CD4-positive, alpha-beta T cell (primary cell): ENCODE measurements at regions of chr20 and their contacts with region 1.

Region 1: GRCh38 chr20:49245921-49246740 is 26.9 kb downstream of the DDX27 start:
- DNase-seq: peak in 4 of 14 experiments; percentile 32 to 58 (median 51)
- ATAC-seq: peak; percentile 67
- H3K4me3 ChIP-seq: no peak overlapping the region
- H3K4me3 Mint-ChIP-seq: no peak overlapping the region
- H3K27ac ChIP-seq: no peak overlapping the region
- H3K27ac Mint-ChIP-seq: peak overlapping the region; percentile 14
- H3K4me1 ChIP-seq: no peaks in the 10 kb centered on the region
- H3K4me1 Mint-ChIP-seq: peaks cover 5% of the 10 kb centered on the region
- H3K27me3 ChIP-seq: no peaks in the 10 kb centered on the region
- H3K27me3 Mint-ChIP-seq: no peaks in the 10 kb centered on the region
- CTCF ChIP-seq: peak; percentile 71

Region 2: GRCh38 chr20:49268600-49269365 is 22.7 kb after region 1 on chr20:
- CTCF ChIA-PET with region 1: no interaction called
- POLR2A ChIA-PET with region 1: no interaction called
- intact Hi-C with region 1: loop called in 1 of 2 experiments (anchors 1 kb)
- DNase-seq: no peak
- ATAC-seq: no peak
- H3K4me3 ChIP-seq: no peak overlapping the region
- H3K4me3 Mint-ChIP-seq: peak overlapping the region; percentile 66
- H3K27ac ChIP-seq: no peak overlapping the region
- H3K27ac Mint-ChIP-seq: peak overlapping the region; percentile 64
- H3K4me1 ChIP-seq: peaks cover 56% of the 10 kb centered on the region
- H3K4me1 Mint-ChIP-seq: peaks cover 78% of the 10 kb centered on the region
- H3K27me3 ChIP-seq: no peaks in the 10 kb centered on the region
- H3K27me3 Mint-ChIP-seq: no peaks in the 10 kb centered on the region
- CTCF ChIP-seq: no peak

Region 3: DNA sequence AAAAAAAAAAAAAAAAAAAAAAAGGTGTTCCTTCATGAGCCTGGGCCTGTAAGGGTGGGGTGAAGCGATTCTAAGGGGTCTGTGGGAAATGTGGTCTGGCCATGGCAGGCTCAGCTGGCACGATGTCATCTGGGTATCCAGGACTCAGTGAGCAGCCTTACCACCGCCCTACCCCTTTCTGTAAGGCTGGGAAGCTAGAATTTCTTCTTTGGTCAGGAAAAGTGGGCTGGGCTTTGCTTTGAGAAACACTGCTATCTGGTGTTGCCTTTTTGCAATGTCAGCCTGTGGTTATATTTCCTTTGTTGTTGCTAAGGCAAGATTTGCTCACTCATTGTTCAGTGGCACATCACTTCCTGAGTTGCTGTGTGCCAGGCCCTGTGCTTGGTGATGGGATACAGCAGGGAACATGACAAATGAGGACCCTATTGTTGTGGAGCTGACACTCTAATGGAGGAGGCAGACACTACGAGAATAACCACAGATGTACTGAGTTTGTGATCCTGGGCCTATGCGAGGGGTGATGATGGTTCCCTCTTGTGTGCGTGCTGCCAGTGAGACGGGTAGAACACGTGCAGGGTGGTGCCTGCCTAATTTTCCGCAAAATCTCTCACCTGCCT is 77.6 kb after region 1 on chr20:
- CTCF ChIA-PET with region 1: interaction called, 3 read pairs
- POLR2A ChIA-PET with region 1: no interaction called
- intact Hi-C with region 1: loop called (anchors 1 to 5 kb)
- DNase-seq: peak in 7 of 14 experiments; percentile 7 to 82 (median 23)
- ATAC-seq: peak; percentile 87
- H3K4me3 ChIP-seq: no peak overlapping the region
- H3K4me3 Mint-ChIP-seq: peak overlapping the region; percentile 44
- H3K27ac ChIP-seq: no peak overlapping the region
- H3K27ac Mint-ChIP-seq: peak overlapping the region; percentile 62
- H3K4me1 ChIP-seq: peaks cover 22% of the 10 kb centered on the region
- H3K4me1 Mint-ChIP-seq: peaks cover 28% of the 10 kb centered on the region
- H3K27me3 ChIP-seq: peaks cover 21 to 23% of the 10 kb centered on the region in 2 experiments
- H3K27me3 Mint-ChIP-seq: peaks cover 42% of the 10 kb centered on the region
- CTCF ChIP-seq: peak; percentile 26

Region 4: GRCh38 chr20:49699200-49699992 is 453.3 kb after region 1 on chr20:
- CTCF ChIA-PET with region 1: no interaction called
- POLR2A ChIA-PET with region 1: no interaction called
- intact Hi-C with region 1: no loop called
- DNase-seq: peak in 4 of 14 experiments; percentile 26 to 69 (median 44)
- ATAC-seq: peak; percentile 59
- H3K4me3 ChIP-seq: no peak overlapping the region
- H3K4me3 Mint-ChIP-seq: peak overlapping the region; percentile 25
- H3K27ac ChIP-seq: no peak overlapping the region
- H3K27ac Mint-ChIP-seq: no peak overlapping the region
- H3K4me1 ChIP-seq: peaks cover 19% of the 10 kb centered on the region
- H3K4me1 Mint-ChIP-seq: peaks cover 40% of the 10 kb centered on the region
- H3K27me3 ChIP-seq: no peaks in the 10 kb centered on the region
- H3K27me3 Mint-ChIP-seq: no peaks in the 10 kb centered on the region
- CTCF ChIP-seq: no peak